Astrocyte of the spinal cord (primary cell): ENCODE measurements at regions of chr11 and their contacts with region 1.

Region 1: DNA sequence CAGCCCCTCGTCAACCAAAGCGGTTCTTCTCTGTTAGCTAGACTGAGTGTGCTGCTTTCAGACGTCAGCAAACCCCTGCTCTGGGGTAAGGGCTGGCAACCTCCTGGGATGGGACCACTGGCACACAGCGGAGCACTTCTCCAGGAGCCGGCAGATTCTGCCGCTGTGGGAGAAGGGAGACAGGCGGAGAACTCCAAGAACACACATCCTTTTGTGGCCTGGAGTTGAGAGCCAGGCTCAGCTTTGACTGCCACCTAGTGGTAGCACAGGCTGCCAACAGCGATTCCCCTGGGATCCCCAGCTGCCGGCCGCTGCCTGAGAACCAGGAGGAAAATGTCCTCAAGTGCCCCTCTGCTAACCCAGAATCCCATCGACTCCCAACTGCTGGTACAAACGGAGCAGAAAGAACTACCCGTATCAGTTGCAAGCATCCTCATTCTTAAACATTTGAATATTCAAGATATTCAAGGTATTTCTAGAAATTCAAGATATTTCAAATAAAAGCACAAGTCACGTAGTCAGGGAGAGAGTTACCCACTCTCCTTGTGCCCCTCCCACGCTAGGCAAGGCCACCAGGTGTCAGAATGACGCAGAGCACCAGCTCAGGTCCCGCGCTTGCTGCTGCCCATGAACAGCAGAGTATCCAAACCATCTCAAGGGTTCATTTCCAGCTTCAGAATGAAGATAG is 4.9 kb downstream of the LTO1 start:
- DNase-seq: peak; percentile 85
- H3K4me3 ChIP-seq: no peak overlapping the region
- CTCF ChIP-seq: peak; percentile 97

Region 2: DNA sequence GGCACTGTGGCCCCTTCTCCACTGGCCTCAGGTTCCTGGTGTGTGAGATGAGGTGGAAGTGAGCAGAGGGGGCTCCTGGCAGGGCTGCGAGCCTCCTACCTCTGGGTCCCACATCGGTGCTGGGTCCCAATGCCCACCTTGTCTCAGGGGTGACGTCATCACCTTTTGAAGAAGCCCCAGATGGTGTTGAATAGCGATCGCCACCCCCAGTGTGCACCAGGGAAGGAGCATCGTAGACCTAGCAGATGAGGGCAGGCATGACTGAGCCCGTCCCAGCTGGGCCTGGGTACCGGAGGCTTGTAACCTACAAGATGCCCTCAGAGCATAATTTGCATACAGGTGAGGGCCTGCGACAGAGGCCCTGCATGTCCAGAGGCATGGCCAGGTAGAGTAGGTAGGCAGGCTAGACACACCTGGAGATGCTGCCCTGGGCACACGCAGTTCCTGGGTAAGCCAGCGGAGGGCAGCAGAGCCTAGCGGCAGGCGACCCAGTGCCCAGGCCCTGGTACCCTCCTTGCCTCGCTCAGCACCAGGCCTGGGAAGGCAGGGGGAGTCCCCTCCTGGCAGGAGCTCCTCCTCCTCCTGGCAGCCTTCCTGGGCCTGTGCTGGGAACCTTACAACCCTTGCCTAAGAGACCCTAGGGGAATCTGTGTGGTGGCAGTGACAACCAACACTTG is 569.0 kb before region 1 on chr11:
- in situ Hi-C with region 1: loop called (anchors 25 kb)
- DNase-seq: peak; percentile 61
- H3K4me3 ChIP-seq: no peak overlapping the region
- CTCF ChIP-seq: peak; percentile 99

Region 3: DNA sequence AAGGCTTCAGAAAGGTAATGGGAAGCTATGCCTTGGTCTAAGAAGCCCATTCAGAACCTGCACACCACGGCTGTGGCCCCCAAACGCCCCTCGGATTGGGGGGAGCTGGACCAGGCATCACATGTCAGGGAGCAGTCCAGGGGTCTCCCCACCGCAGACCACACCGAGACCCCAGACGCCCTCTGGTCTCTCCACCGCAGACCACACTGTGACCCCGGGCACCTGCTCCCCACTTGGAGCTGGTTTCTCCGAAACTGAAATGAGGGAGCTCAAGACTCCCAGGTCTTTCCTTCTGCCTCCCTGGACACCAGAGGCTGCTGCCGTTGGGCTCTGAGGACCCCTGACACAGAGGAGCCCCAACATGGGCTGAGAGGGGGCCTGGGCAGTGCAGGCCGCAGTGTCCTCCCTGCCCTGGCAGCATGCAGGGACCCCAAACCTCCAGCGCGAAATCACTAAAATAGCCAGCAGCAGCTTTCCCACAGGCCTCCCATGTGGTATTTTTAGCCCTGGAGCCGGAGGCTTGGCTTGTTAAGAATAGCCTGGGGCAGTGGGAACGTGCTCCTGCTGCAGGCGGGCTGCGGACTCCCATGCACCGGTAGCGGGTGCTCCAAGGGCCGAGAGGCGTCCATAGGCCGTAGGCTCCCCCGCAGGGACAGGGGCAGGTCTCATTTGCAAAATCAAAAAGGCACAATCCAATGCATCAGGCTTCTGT is 181.1 kb before region 1 on chr11:
- in situ Hi-C with region 1: no loop called
- DNase-seq: no peak
- H3K4me3 ChIP-seq: no peak overlapping the region
- CTCF ChIP-seq: no peak

Region 4: DNA sequence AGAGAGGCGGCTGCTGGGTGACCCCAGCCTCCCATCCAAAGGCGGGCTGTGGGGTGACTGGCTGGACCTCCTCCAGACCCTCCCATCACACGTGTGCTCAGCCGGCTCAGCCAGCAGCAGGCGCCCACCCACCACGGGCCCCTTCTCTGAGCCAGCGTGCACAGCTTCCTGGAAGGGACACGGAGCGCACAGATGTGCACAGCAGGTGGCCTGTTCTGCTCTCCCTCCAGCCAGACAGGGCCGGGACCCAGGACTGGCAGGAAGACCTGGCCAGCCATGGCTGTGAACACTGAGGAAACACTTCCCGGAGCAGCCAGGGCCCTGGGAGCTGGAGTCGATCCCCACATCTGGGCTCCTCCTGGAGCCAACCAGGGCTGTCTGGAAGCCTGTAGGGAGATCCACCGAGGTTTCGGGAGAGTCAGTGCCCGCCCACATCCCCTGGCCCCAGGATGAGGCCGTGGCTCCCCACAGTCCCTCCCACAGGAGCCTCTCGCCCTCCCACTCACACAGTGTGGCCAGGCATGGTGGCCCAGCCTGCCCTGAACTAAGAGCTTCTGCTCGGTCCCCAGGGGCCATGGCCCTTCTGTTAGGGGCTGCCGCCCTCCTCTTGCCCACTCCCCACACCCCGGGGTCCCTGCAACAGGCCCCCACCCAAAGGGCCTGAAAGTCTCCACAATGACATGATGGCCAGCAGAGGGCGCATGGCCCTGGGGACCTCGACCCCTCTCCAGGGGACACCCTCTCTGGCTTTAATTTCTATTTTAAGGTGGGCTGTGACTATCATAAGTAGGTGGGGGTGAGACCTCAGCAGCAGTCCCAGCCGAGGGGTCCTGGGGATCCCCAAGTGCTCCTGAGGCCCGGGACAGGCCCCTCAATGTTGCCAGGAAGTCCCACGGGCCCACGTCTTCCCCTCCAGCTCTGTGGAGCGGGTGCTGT is 239.5 kb after region 1 on chr11:
- in situ Hi-C with region 1: no loop called
- DNase-seq: peak; percentile 19
- H3K4me3 ChIP-seq: no peak overlapping the region
- CTCF ChIP-seq: peak; percentile 76